Naive thymus-derived CD4-positive, alpha-beta T cell (primary cell): ENCODE measurements at regions of chr12 and their contacts with region 1.

Region 1: GRCh38 chr12:91877022-91877421 is 268.6 kb downstream of the BTG1 start:
- DNase-seq: peak; percentile 51 to 97 (median 93)
- ATAC-seq: peak; percentile 94
- H3K4me3 ChIP-seq: peak overlapping the region; percentile 39
- H3K4me3 Mint-ChIP-seq: peak overlapping the region; percentile 77 to 88 (median 82)
- H3K27ac ChIP-seq: peak overlapping the region; percentile 92
- H3K27ac Mint-ChIP-seq: peak overlapping the region; percentile 95 to 100 (median 99)
- H3K4me1 ChIP-seq: peaks cover 59% of the 10 kb centered on the region in 2 donors
- H3K4me1 Mint-ChIP-seq: peaks cover 40 to 85% (median 80%) of the 10 kb centered on the region in 7 donors
- H3K27me3 ChIP-seq: no peaks in the 10 kb centered on the region
- H3K27me3 Mint-ChIP-seq: no peaks in the 10 kb centered on the region

Region 2: GRCh38 chr12:91687052-91688017 is 189.7 kb before region 1 on chr12:
- CTCF ChIA-PET with region 1: no interaction called
- POLR2A ChIA-PET with region 1: no interaction called
- intact Hi-C with region 1: loop called in 1 of 2 experiments (anchors 5 kb)
- DNase-seq: peak in 8 of 9 donors; percentile 25 to 83 (median 76)
- ATAC-seq: peak; percentile 92
- H3K4me3 ChIP-seq: no peak overlapping the region
- H3K4me3 Mint-ChIP-seq: peak overlapping the region in 9 of 10 donors; percentile 4 to 52 (median 38)
- H3K27ac ChIP-seq: no peak overlapping the region
- H3K27ac Mint-ChIP-seq: peak overlapping the region; percentile 6 to 84 (median 53)
- H3K4me1 ChIP-seq: peaks cover 0 to 17% of the 10 kb centered on the region in 2 donors
- H3K4me1 Mint-ChIP-seq: peaks cover 10 to 32% (median 25%) of the 10 kb centered on the region in 7 donors
- H3K27me3 ChIP-seq: no peaks in the 10 kb centered on the region
- H3K27me3 Mint-ChIP-seq: no peaks in the 10 kb centered on the region

Region 3: GRCh38 chr12:91890742-91891141 is 13.7 kb after region 1 on chr12:
- CTCF ChIA-PET with region 1: no interaction called
- POLR2A ChIA-PET with region 1: interaction called, 31 read pairs
- intact Hi-C with region 1: no loop called
- DNase-seq: no peak
- ATAC-seq: no peak
- H3K4me3 ChIP-seq: no peak overlapping the region
- H3K4me3 Mint-ChIP-seq: no peak overlapping the region
- H3K27ac ChIP-seq: no peak overlapping the region
- H3K27ac Mint-ChIP-seq: no peak overlapping the region
- H3K4me1 ChIP-seq: no peaks in the 10 kb centered on the region
- H3K4me1 Mint-ChIP-seq: peaks cover 0 to 18% (median 13%) of the 10 kb centered on the region in 7 donors
- H3K27me3 ChIP-seq: no peaks in the 10 kb centered on the region
- H3K27me3 Mint-ChIP-seq: peaks cover 0 to 3% (median 0%) of the 10 kb centered on the region in 5 donors

Region 4: DNA sequence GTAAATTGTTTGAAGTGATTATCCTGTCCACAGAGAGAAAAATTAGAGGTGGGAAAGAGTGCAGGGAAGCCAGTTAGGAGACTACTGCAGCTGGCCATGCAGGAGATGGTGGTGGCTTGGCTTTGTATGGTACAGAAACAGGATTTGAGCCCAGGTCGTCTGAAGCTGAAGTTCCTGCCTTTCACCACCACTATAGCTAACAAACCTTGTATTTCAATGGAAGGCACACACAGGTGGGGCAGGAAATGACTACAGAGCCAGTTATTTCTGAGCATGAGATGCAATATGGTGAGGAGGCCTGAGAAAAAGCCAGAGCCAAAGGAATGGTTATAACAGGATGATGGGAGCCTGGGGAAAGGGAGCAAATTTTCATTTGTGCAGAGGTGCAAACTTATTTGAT is 164.7 kb after region 1 on chr12:
- CTCF ChIA-PET with region 1: interaction called, 3 read pairs
- POLR2A ChIA-PET with region 1: interaction called, 20 read pairs
- intact Hi-C with region 1: no loop called
- DNase-seq: peak in 7 of 9 donors; percentile 44 to 71 (median 60)
- ATAC-seq: peak; percentile 84
- H3K4me3 ChIP-seq: no peak overlapping the region
- H3K4me3 Mint-ChIP-seq: peak overlapping the region; percentile 41 to 78 (median 62)
- H3K27ac ChIP-seq: peak overlapping the region; percentile 12
- H3K27ac Mint-ChIP-seq: peak overlapping the region; percentile 70 to 99 (median 89)
- H3K4me1 ChIP-seq: peaks cover 20 to 60% of the 10 kb centered on the region in 2 donors
- H3K4me1 Mint-ChIP-seq: peaks cover 41 to 93% (median 88%) of the 10 kb centered on the region in 7 donors
- H3K27me3 ChIP-seq: no peaks in the 10 kb centered on the region
- H3K27me3 Mint-ChIP-seq: no peaks in the 10 kb centered on the region

Region 5: GRCh38 chr12:92185052-92185451 is 308.0 kb after region 1 on chr12:
- CTCF ChIA-PET with region 1: no interaction called
- POLR2A ChIA-PET with region 1: no interaction called
- intact Hi-C with region 1: loop called in 1 of 2 experiments (anchors 2 kb)
- DNase-seq: peak in 8 of 9 donors; percentile 30 to 70 (median 56)
- ATAC-seq: peak; percentile 88
- H3K4me3 ChIP-seq: no peak overlapping the region
- H3K4me3 Mint-ChIP-seq: peak overlapping the region; percentile 28 to 77 (median 68)
- H3K27ac ChIP-seq: peak overlapping the region; percentile 74
- H3K27ac Mint-ChIP-seq: peak overlapping the region; percentile 83 to 96 (median 93)
- H3K4me1 ChIP-seq: peaks cover 22 to 29% of the 10 kb centered on the region in 2 donors
- H3K4me1 Mint-ChIP-seq: peaks cover 23 to 71% (median 60%) of the 10 kb centered on the region in 7 donors
- H3K27me3 ChIP-seq: no peaks in the 10 kb centered on the region
- H3K27me3 Mint-ChIP-seq: no peaks in the 10 kb centered on the region

Region 6: GRCh38 chr12:92408072-92408900 is 531.3 kb after region 1 on chr12:
- CTCF ChIA-PET with region 1: no interaction called
- POLR2A ChIA-PET with region 1: interaction called, 3 read pairs
- intact Hi-C with region 1: loop called in 1 of 2 experiments (anchors 1 kb)
- DNase-seq: peak in 3 of 9 donors; percentile 29 to 40 (median 30)
- ATAC-seq: peak; percentile 34
- H3K4me3 ChIP-seq: no peak overlapping the region
- H3K4me3 Mint-ChIP-seq: peak overlapping the region in 4 of 10 donors; percentile 18 to 58 (median 28)
- H3K27ac ChIP-seq: no peak overlapping the region
- H3K27ac Mint-ChIP-seq: peak overlapping the region in 8 of 9 donors; percentile 30 to 89 (median 72)
- H3K4me1 ChIP-seq: peaks cover 30 to 33% of the 10 kb centered on the region in 2 donors
- H3K4me1 Mint-ChIP-seq: peaks cover 21 to 80% (median 67%) of the 10 kb centered on the region in 7 donors
- H3K27me3 ChIP-seq: no peaks in the 10 kb centered on the region
- H3K27me3 Mint-ChIP-seq: no peaks in the 10 kb centered on the region

Region 7: DNA sequence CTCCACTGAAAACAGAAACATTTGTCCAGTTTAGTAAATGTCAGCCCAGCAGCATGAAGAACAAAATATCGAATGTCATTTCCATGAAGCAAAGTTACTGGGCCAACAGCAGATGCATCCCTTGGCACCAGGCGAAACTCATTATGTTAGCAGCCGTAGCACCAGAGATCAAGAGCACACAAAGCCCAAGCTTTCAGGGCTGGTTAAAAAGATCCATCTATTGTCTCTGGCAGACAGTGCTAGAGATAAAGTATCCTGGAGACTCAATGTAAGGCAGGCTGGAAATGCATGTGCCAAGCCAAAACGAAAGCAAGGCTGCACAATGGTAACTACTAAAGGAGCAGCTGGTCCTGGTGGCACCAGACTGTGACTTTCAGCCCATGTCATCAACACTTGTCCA is 705.5 kb after region 1 on chr12:
- CTCF ChIA-PET with region 1: no interaction called
- POLR2A ChIA-PET with region 1: no interaction called
- intact Hi-C with region 1: no loop called
- DNase-seq: no peak
- ATAC-seq: no peak
- H3K4me3 ChIP-seq: no peak overlapping the region
- H3K4me3 Mint-ChIP-seq: no peak overlapping the region
- H3K27ac ChIP-seq: no peak overlapping the region
- H3K27ac Mint-ChIP-seq: peak overlapping the region in 1 of 9 donors; percentile 41
- H3K4me1 ChIP-seq: no peaks in the 10 kb centered on the region
- H3K4me1 Mint-ChIP-seq: peaks cover 0 to 5% (median 0%) of the 10 kb centered on the region in 7 donors
- H3K27me3 ChIP-seq: no peaks in the 10 kb centered on the region
- H3K27me3 Mint-ChIP-seq: no peaks in the 10 kb centered on the region

Region 8: GRCh38 chr12:93243689-93244513 is 1366.9 kb after region 1 on chr12:
- CTCF ChIA-PET with region 1: no interaction called
- POLR2A ChIA-PET with region 1: no interaction called
- intact Hi-C with region 1: loop called in 1 of 2 experiments (anchors 2 kb)
- DNase-seq: peak in 6 of 9 donors; percentile 20 to 60 (median 40)
- ATAC-seq: peak; percentile 68
- H3K4me3 ChIP-seq: no peak overlapping the region
- H3K4me3 Mint-ChIP-seq: peak overlapping the region; percentile 12 to 79 (median 70)
- H3K27ac ChIP-seq: peak overlapping the region; percentile 46
- H3K27ac Mint-ChIP-seq: peak overlapping the region in 8 of 9 donors; percentile 75 to 91 (median 88)
- H3K4me1 ChIP-seq: peaks cover 11 to 23% of the 10 kb centered on the region in 2 donors
- H3K4me1 Mint-ChIP-seq: peaks cover 27 to 65% (median 56%) of the 10 kb centered on the region in 7 donors
- H3K27me3 ChIP-seq: no peaks in the 10 kb centered on the region
- H3K27me3 Mint-ChIP-seq: no peaks in the 10 kb centered on the region